Ascending aorta (tissue), 2 donors: ENCODE measurements at regions of chr5 and their contacts with region 1.

Region 1: DNA sequence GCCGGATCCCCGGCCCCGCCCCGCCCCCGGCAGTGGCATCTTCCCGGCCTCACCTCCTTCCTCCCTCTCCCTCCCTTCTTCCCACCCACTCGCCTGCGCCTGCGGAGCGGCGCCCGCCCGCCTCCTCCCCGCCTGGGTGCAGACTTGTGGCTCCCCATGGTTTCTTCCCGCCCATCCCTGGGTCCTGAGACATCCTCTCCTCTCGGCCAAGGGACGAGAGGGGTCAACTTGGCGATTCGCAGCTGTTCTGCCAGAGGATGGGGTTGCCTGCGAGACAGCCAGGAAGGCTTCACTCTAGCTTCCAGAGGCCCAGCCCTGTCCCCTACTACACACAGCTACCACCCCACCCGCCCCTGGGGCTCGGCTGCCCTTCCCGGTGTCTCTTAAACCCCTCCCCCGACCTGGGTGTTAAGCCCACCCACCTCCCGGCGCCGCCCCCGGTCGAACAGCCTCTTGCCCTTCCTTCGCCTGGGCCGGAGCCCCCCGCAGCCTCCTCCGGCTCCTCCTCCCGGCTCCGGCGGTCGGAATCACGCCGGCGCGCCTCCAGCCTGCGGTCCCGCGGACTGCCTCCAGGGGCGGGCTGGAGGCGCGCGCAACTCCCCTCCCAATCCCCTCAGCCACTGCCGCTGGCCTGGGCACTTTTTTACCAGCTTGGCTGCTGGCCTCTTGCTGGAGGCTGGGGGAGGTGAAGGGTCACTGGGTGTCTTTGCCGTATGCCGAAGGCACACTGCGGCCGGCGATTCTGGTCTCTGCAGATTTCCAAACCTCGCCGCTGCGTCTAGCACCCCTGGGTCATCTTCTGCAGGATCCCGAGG is 1.9 kb downstream of the JADE2 start:
- DNase-seq: peak; percentile 39 to 92
- H3K4me3 ChIP-seq: peak overlapping the region; percentile 80 to 98
- H3K27ac ChIP-seq: peak overlapping the region; percentile 92 to 96
- H3K4me1 ChIP-seq: peaks cover 18 to 50% of the 10 kb centered on the region in 2 donors
- H3K27me3 ChIP-seq: no peaks in the 10 kb centered on the region
- CTCF ChIP-seq: peak; percentile 96 to 99 (median 99)

Region 2: GRCh38 chr5:134370871-134371833 is 156.2 kb before region 1 on chr5 and contains the start of gene UBE2B:
- intact Hi-C with region 1: loop called (anchors 1 kb)
- DNase-seq: peak; percentile 97 to 99
- H3K4me3 ChIP-seq: peak within 1 kb of the TSS; percentile 79 to 89
- H3K27ac ChIP-seq: peak within 1 kb of the TSS; percentile 94 to 98
- H3K4me1 ChIP-seq: peaks cover 3 to 18% of the 10 kb centered on the region in 2 donors
- H3K27me3 ChIP-seq: no peaks in the 10 kb centered on the region
- CTCF ChIP-seq: no peak
- total RNA-seq, gene UBE2B: 42.6 TPM

Region 3: DNA sequence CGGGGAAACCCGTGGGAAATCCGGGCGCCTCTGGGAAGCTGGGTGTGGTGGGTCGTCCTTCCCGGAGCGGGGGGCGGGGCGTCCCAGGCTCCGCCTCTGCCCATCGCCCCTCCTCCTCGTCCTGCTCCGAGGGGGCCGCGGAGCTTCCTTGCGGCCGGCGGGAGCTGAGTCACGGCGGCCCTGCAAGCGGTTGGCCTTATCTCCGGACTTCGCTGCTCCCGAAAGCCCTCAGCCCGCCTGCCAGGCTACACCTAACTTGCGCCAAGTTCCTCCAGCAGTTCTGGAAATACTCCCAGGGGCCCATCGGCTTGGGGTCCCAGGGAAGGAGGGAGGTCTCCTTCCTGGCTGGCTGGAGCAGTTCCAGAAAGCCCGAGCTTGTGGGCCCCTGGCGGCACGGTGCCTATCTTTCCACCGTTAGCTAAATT is 61.5 kb before region 1 on chr5:
- intact Hi-C with region 1: loop called (anchors 1 kb)
- DNase-seq: peak; percentile 52 to 94
- H3K4me3 ChIP-seq: peak overlapping the region; percentile 64 to 68
- H3K27ac ChIP-seq: peak overlapping the region; percentile 94 to 98
- H3K4me1 ChIP-seq: peaks cover 6 to 22% of the 10 kb centered on the region in 2 donors
- H3K27me3 ChIP-seq: no peaks in the 10 kb centered on the region
- CTCF ChIP-seq: no peak

Region 4: GRCh38 chr5:134545070-134545868 is 17.9 kb after region 1 on chr5:
- intact Hi-C with region 1: loop called (anchors 1 kb)
- DNase-seq: peak; percentile 57 to 94
- H3K4me3 ChIP-seq: peak overlapping the region in 1 of 2 donors; percentile 17
- H3K27ac ChIP-seq: peak overlapping the region; percentile 81
- H3K4me1 ChIP-seq: peaks cover 16 to 56% of the 10 kb centered on the region in 2 donors
- H3K27me3 ChIP-seq: no peaks in the 10 kb centered on the region
- CTCF ChIP-seq: peak in 1 of 3 experiments; percentile 13

Region 5: GRCh38 chr5:134577796-134578363 is 50.5 kb after region 1 on chr5:
- intact Hi-C with region 1: loop called (anchors 1 kb)
- DNase-seq: peak in 1 of 2 donors; percentile 88
- H3K4me3 ChIP-seq: no peak overlapping the region
- H3K27ac ChIP-seq: no peak overlapping the region
- H3K4me1 ChIP-seq: peaks cover 9 to 20% of the 10 kb centered on the region in 2 donors
- H3K27me3 ChIP-seq: no peaks in the 10 kb centered on the region
- CTCF ChIP-seq: peak; percentile 58 to 86 (median 80)